Heart left ventricle (tissue), 16 donors: ENCODE measurements at regions of chr16 and their contacts with region 1.

Region 1: DNA sequence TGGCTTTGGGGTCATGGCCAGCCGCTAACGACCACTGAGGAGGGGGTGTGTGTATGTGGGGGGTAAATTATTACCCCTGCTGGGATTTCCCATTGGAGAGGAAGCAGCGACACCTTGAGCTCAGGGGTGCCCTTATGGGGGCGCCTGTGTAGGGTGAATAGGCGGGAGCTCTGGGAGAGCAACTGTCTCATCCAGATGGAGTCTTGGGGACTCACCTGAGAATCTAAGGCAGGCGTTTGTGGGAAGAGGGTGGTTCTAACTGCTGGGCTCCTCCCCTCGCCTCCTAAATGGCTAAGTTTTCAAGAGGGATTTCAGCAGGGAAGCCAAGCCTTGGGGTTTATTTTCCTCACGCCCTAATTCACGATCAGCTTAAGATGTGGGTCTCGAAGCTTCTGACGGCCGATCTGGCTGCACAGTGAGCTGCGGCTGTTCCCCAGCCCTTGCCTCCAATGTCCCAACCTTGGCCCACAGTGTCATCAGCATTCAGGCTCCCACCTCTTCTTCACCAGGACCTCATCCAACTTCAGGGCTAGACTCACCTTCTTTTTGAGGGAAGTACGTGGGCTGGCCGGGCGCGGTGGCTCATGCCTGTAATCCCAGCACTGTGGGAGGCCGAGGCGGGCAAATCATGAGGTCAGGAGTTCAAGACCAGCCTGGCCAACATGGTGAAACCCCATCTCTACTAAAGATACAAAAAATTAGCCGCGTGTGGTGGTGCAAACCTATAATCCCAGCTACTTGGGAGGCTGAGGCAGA is 136.9 kb upstream of the EEF2KMT start:
- DNase-seq: no peak
- ATAC-seq: no peak
- H3K4me3 ChIP-seq: no peak overlapping the region
- H3K27ac ChIP-seq: no peak overlapping the region
- H3K4me1 ChIP-seq: no peaks in the 10 kb centered on the region
- H3K27me3 ChIP-seq: peaks cover 0 to 25% (median 0%) of the 10 kb centered on the region in 9 donors
- CTCF ChIP-seq: no peak
- POLR2A ChIP-seq: no peak

Region 2: DNA sequence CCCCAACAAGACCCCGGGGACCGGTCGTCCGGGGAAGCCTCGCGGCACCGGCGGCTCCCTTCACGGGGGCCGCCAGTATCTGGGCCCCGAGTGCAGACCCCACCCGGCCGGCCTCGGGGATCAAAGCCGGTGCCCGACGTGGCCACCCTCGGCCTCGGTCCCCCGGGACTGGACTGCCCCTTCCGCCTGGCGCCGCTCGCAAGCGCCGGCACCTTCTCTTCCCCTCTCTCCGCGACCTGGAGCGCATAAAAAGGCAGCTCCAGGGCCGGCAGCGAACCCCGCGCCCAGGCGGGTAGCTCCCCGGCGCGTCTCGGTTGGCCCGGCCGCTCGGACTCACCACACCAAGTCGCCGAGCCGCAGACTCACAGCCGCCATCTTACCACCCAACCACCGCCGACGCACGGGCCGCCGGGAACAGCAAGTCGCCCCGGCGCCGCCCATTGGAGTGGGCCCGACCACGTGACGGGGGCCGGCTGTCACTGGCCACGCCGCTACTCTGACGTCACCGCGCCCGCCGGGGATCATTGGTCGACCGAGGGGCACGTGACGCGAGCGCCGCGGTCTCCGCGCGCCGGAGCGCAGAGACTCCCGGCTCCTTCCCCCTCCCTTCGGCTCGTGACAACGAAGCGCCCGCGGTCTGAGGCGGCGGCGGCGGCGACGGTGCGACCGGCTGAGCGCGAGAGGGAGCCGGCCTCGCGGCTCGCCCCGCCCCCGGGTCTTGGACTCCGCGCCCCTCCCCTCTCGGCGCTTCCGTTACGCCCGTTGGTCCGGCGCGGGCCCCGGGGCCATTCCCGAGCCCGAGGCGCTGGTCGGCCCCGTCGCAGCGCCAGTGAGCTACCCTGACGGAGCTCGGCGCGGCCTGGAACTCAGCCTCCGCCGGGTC is 387.3 kb before region 1 on chr16 and contains the starts of genes GLYR1 and UBN1:
- intact Hi-C with region 1: no loop called
- DNase-seq: peak; percentile 100
- ATAC-seq: peak; percentile 96 to 98 (median 97)
- H3K4me3 ChIP-seq: peak within 1 kb of the TSS; percentile 67 to 99 (median 90)
- H3K27ac ChIP-seq: peak within 1 kb of the TSS; percentile 88 to 99 (median 96)
- H3K4me1 ChIP-seq: peaks cover 0 to 66% (median 47%) of the 10 kb centered on the region in 12 donors
- H3K27me3 ChIP-seq: no peaks in the 10 kb centered on the region
- CTCF ChIP-seq: no peak
- POLR2A ChIP-seq: peak; percentile 34 to 91
- total RNA-seq, gene GLYR1: 54.3 to 96.6 (median 75.8) TPM
- total RNA-seq, gene UBN1: 25.0 to 77.9 (median 32.7) TPM

Region 3: DNA sequence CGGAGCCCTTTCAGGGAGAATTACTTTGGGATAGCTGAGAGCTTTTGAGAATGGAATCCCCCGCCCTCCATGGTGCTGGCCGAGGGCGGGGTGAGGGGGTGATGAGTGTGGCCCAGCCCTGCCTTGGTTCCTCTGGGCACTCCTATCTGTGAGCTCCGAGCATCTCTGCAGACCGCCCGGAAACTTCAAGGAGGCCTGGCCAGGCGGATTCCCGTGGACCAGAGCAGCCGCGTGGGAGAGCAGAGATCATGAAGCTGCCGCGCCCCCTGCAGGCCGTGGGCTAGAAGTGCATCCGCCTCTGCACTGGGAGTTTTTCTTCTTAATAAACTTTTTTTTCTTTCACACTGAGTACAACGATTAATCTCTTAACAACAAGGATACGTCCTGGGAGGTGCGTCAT is 256.0 kb after region 1 on chr16:
- intact Hi-C with region 1: loop called in 1 of 10 experiments (anchors 10 kb)
- DNase-seq: peak in 1 of 5 donors; percentile 36
- ATAC-seq: no peak
- H3K4me3 ChIP-seq: no peak overlapping the region
- H3K27ac ChIP-seq: no peak overlapping the region
- H3K4me1 ChIP-seq: no peaks in the 10 kb centered on the region
- H3K27me3 ChIP-seq: no peaks in the 10 kb centered on the region
- CTCF ChIP-seq: peak; percentile 25 to 53 (median 46)
- POLR2A ChIP-seq: no peak